Activated naive CD4-positive, alpha-beta T cell treated with anti-CD3 and anti-CD28 coated beads, Interleukin-2, amount 10 ng/mL, durations not matched to agents 7 days and 5 days (primary cell): ENCODE measurements at regions of chr2 and their contacts with region 1.

Region 1: GRCh38 chr2:97697252-97698235 is 15.8 kb upstream of the ZAP70 start:
- DNase-seq: peak; percentile 95
- H3K4me3 Mint-ChIP-seq: no peak overlapping the region
- H3K27ac Mint-ChIP-seq: peak overlapping the region; percentile 9
- H3K4me1 Mint-ChIP-seq: peaks cover 9% of the 10 kb centered on the region
- H3K27me3 Mint-ChIP-seq: peaks cover 28% of the 10 kb centered on the region

Region 2: DNA sequence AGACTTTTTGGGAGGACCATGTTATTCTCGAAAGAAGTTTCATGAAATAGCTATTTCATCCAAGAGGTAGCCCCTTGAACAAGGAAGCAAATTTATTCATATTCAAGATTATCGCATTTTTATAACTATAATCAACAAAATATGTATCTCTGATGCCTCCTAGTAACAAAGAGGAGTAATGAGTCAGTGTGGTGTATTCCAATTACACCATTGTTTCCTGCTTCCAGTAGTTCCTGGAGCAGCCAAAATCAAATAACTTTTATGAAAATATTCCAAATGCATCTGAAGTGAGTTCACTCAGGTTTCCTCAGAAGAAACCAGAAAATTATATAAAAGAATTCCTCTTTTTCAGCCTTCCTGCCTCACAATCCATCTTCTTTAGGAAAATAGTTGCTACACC is 150.8 kb before region 1 on chr2:
- CTCF ChIA-PET with region 1: no interaction called
- DNase-seq: no peak
- H3K4me3 Mint-ChIP-seq: no peak overlapping the region
- H3K27ac Mint-ChIP-seq: no peak overlapping the region
- H3K4me1 Mint-ChIP-seq: no peaks in the 10 kb centered on the region
- H3K27me3 Mint-ChIP-seq: no peaks in the 10 kb centered on the region

Region 3: DNA sequence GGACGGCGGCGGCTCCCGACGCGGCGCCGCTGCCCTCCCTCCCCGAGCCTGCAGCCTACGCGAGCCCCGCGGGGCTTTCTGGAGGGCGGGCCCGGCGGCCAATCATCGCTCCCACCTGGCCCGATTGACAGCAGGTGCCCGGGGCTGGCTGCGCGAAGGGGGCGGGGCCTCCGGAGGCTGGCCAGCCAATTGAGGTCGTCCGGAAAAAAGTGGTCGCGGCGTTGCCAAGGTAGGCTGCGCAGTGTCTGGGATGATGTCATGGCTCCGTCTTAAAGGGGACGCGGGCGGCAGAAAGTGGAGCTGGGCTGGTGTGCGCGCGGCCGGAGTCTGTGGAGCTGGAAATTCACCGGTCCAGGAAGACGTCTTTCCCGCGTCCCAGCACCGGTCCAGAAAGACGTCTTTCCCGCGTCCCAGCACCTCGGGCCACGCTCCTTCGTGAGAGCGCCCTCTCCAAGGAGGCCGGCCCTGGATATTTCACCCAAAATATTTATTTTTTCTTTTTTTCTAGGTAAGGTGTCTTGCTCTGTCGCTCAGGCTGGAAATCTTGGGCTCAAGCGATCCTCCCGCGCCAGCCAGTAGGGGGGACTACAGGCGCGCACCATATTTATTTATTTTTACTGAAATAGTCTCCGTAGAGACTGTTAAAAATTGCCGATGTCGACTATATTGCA is 33.4 kb before region 1 on chr2 and contains the start of gene ACTR1B:
- CTCF ChIA-PET with region 1: interaction called, 78 read pairs
- DNase-seq: peak; percentile 98
- H3K4me3 Mint-ChIP-seq: peak within 1 kb of the TSS; percentile 93
- H3K27ac Mint-ChIP-seq: peak within 1 kb of the TSS; percentile 98
- H3K4me1 Mint-ChIP-seq: peaks cover 36% of the 10 kb centered on the region
- H3K27me3 Mint-ChIP-seq: no peaks in the 10 kb centered on the region

Region 4: DNA sequence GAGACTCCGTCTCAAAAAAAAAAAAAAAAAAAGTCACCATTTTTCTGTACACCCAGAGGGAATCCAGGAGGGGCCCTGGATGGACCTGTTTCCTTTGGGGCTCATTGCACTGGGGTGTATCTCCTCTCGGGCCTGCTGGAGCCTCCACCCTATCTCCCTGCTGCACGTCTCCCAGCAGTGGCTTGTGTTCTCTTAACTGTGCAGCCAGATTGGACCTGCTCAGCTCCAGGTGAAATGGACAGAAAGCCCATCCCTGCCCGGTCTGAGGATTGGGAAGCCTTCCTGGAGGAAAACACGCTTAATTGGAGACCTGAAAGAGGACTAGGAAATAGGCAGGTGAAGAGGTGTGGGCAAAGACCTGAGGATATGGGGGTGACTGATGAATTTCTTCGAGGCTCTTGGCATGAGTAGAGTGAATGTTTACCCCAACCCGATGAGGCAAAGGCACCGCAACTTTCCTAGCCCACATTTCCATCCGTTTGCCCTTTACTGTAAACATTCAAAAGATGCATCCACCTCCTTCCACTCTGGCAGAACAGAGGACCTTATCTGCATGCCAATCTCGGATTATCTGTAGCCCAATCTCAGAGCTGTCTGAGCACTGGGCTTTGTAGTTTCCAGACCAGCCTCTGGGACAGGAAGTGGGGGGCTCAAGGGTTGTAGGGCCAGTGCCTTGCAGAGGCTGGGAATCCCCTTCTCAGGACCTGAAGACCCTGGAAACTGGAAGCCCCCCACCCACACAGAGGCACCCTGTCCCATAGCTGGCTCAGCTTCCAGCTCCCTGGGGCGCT is 13.2 kb after region 1 on chr2:
- CTCF ChIA-PET with region 1: interaction called, 56 read pairs
- DNase-seq: peak; percentile 25
- H3K4me3 Mint-ChIP-seq: no peak overlapping the region
- H3K27ac Mint-ChIP-seq: no peak overlapping the region
- H3K4me1 Mint-ChIP-seq: peaks cover 52% of the 10 kb centered on the region
- H3K27me3 Mint-ChIP-seq: peaks cover 13% of the 10 kb centered on the region

Region 5: GRCh38 chr2:97718051-97718882 is 20.7 kb after region 1 on chr2:
- CTCF ChIA-PET with region 1: interaction called, 18 read pairs
- DNase-seq: peak; percentile 86
- H3K4me3 Mint-ChIP-seq: peak overlapping the region; percentile 85
- H3K27ac Mint-ChIP-seq: peak overlapping the region; percentile 96
- H3K4me1 Mint-ChIP-seq: peaks cover 78% of the 10 kb centered on the region
- H3K27me3 Mint-ChIP-seq: no peaks in the 10 kb centered on the region

Region 6: DNA sequence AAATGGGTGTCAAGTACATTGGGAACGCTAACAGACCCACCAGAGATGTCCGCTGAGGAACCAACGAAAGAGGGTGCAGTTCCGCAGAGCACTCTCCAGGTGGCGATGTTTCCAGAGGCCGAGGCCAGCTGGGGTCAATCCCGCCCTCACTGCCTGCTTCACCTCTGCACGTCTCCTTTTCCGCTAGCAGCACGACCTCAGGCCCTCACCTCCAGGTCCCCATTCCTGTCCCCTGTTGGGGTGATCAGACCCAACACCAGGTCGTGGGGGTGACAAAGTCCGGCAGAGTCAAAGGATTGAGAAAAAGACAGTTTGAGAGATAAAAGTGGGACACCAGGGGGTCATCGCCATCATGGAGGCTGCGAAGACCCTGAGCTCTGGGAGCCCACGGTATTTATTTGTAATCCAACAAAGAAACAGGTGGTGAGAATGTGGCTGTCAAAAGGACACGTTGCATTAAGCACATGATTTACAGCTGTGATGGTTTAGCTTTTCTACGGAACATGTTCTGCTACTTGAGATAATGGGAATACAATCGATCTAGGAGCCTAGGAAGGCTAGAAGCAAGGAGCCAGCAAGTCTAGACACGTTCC is 43.1 kb after region 1 on chr2:
- CTCF ChIA-PET with region 1: interaction called, 79 read pairs
- DNase-seq: peak; percentile 46
- H3K4me3 Mint-ChIP-seq: peak overlapping the region; percentile 17
- H3K27ac Mint-ChIP-seq: peak overlapping the region; percentile 93
- H3K4me1 Mint-ChIP-seq: peaks cover 57% of the 10 kb centered on the region
- H3K27me3 Mint-ChIP-seq: no peaks in the 10 kb centered on the region

Region 7: GRCh38 chr2:97751752-97752151 is 54.2 kb after region 1 on chr2:
- CTCF ChIA-PET with region 1: interaction called, 79 read pairs
- DNase-seq: no peak
- H3K4me3 Mint-ChIP-seq: no peak overlapping the region
- H3K27ac Mint-ChIP-seq: no peak overlapping the region
- H3K4me1 Mint-ChIP-seq: peaks cover 11% of the 10 kb centered on the region
- H3K27me3 Mint-ChIP-seq: no peaks in the 10 kb centered on the region

Region 8: DNA sequence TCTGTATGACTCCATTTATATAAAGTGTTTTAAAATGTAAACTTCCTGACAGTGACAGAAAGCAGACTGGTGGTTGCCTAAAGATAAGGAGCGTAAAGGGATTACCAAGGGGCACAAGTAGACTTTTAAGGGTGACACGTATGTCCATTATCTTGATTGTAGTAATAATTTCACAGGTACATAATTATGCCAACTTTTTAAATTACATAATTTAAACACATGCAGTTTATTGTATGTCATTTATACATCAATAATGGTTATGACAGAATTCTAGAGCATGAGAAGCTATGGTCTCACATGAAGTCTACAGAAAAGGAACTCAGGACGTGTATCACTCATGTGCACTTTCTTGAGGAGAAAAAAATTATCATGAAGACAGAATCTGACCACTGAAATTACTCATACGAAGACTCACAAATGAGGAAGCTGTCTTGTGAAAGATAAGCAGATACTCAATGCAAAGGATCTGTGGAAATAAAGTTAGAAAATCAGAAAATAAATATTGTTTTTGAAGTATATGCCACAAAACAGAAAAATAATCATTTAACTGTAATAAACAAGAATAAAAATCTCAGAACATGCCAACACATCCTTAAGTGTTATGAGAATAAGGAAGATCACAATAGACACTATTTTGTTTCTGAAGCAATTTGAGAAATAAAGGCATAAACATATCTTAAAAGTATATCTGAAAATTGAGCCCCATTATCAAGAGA is 213.8 kb after region 1 on chr2:
- CTCF ChIA-PET with region 1: no interaction called
- DNase-seq: no peak
- H3K4me3 Mint-ChIP-seq: no peak overlapping the region
- H3K27ac Mint-ChIP-seq: no peak overlapping the region
- H3K4me1 Mint-ChIP-seq: peaks cover 3% of the 10 kb centered on the region
- H3K27me3 Mint-ChIP-seq: no peaks in the 10 kb centered on the region

Region 9: DNA sequence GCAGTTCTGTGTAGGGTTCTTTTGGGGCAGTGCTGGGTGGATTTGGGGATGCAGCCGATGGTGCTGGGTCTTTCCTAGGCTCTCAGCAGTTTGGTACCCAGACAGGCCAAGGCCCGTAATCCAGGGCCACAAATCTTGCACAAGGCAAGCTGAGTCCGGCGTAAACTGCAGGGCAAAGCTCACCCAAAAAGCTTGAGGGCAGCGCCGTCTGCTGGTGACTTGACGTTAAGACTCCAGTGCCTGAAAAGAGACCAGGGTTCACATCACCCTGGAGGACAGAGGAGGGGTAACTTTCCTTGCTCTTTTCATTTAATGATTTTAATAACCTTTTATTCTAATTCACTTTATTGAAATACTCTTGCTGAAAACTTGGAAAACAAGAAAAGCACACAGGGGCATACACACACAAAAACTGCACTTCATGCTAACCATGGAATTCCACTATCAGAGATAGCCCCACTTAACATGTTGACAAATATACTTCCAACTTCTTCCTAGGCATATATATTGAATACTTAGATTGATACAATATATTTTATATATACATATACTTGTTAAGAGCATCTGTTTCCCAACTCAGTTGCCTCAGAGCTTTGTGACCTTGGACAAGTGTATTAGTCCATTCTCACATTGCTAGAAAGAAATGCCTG is 687.6 kb after region 1 on chr2:
- CTCF ChIA-PET with region 1: interaction called, 18 read pairs
- DNase-seq: peak; percentile 85
- H3K4me3 Mint-ChIP-seq: no peak overlapping the region
- H3K27ac Mint-ChIP-seq: no peak overlapping the region
- H3K4me1 Mint-ChIP-seq: no peaks in the 10 kb centered on the region
- H3K27me3 Mint-ChIP-seq: peaks cover 30% of the 10 kb centered on the region